ENCODE measurements at regions of chr5 and their contacts with region 1.

Region 1: DNA sequence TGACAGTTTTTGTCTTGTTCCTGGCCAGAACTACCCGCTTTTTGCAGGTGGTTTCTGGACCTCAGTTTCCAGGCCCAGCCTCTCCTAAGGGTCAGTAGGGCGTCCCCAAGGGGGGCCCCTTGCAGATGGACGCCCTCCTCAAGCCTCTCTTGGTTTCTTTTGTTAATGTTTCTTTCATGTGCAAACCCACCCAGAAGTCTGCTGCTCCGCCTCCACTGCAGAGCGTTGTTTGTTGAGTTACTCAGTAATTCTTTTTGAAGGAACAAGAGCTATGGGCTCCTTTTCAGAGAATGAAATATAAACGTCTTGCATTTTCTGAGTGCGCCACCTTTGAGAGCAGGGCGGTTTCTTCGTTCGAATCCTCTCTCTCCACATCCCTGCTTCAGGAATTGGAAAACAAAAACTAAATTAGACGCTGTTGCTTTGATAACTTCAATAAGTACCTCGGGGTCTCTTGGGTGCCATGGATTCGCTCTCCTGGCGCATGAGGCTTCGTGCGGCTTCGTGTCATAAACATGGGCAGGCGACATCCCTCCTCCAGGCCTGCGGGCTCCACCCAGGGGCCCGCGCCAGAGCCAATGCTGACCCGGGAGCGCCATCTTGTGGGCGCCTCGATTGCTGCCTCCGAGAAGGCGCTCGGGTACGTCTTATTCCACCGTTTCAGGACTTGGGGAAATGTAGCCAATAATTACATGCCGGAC is 38.3 kb upstream of the CKMT2 start:
- DNase-seq: peak; percentile 63
- ATAC-seq: peak; percentile 88
- H3K4me3 Mint-ChIP-seq: no peak overlapping the region
- H3K27ac Mint-ChIP-seq: no peak overlapping the region
- H3K4me1 Mint-ChIP-seq: peaks cover 5% of the 10 kb centered on the region
- H3K27me3 Mint-ChIP-seq: peaks cover 12% of the 10 kb centered on the region
- CTCF ChIP-seq: no peak

Region 2: GRCh38 chr5:80346055-80346454 is 848.7 kb before region 1 on chr5:
- CTCF ChIA-PET with region 1: interaction called, 3 read pairs
- POLR2A ChIA-PET with region 1: interaction called, 3 read pairs
- intact Hi-C with region 1: loop called (anchors 2 kb)
- DNase-seq: no peak
- ATAC-seq: peak; percentile 57
- H3K4me3 Mint-ChIP-seq: no peak overlapping the region
- H3K27ac Mint-ChIP-seq: no peak overlapping the region
- H3K4me1 Mint-ChIP-seq: no peaks in the 10 kb centered on the region
- H3K27me3 Mint-ChIP-seq: no peaks in the 10 kb centered on the region
- CTCF ChIP-seq: no peak

Measured in activated B cell treated with CpG ODN at 0.5 μM for 24 hours (primary cell).